MCF 10A (cell line): ENCODE measurements at regions of chr2 and their contacts with region 1.

Region 1: DNA sequence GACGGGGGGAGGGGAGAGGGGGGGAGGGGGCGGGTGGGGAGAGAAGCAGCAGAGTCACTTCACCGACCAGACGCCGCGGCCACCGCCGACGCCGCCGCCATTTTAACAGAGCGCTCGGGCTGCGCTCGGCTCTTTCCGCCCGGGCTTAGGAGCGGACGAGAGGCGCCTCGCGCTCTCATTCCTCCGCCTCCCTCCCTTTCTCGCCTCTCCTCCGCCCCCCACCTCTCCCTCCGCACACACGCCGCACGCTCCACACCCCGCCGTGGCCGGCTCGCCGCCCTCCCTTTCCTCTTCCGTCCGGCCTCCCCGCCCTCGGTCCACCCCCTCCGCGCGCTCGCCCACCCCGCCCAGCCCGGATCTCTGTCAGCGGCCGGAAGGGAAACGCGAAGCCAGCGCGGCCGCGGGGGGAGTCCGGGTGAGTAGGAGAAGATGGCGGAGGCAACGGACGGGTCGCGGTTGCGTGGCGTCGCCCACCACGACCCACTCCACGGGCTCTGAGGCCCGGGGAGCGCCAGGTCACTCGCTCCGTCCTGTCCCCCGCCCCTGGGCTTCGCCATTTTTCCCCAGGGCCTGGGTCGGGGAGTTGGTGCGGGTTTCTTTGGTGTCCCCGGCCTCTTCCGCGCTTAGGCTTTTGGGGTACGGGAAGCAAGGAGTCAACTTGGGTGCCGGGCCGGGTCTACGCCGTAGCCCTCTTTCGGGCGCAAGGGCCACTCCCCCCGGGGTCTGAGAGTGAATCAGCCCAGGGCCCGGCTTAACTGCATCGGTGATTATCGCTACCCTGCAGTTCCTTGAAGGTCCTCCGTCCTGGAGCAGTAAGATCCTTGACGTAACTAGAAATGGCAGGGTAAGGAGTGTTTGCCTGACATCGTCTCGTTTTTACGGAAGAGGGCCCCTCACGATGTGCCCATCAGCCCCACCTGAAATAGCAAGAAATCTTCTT is at the start of gene USP34:
- DNase-seq: peak; percentile 94
- H3K4me3 Mint-ChIP-seq: peak within 1 kb of the TSS; percentile 79
- H3K27ac Mint-ChIP-seq: peak within 1 kb of the TSS; percentile 97
- H3K4me1 Mint-ChIP-seq: peaks cover 8% of the 10 kb centered on the region
- H3K27me3 Mint-ChIP-seq: no peaks in the 10 kb centered on the region
- CTCF ChIP-seq: no peak
- total RNA-seq, gene USP34: 101 and 105 TPM in 2 replicates

Region 2: DNA sequence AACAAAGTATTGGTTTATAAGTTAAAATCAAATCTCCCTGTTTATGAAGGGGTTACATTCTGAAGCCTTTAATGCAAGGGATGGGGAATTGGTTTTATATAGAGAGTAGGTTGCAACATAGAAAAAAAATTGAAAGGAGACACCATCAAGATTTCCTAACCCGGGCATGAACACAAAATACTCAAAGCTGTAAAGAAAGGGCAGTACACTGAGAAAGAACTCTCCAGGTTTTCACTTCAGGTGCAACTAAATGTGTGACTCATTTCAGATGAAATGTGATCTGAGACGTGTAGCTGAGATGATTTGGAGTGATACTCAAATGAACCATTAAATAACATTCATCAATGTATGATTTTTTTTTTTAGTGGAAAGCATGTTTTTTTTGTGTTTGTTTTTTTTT is 361.9 kb before region 1 on chr2:
- CTCF ChIA-PET with region 1: no interaction called
- POLR2A ChIA-PET with region 1: no interaction called
- intact Hi-C with region 1: no loop called
- DNase-seq: peak; percentile 67
- H3K4me3 Mint-ChIP-seq: no peak overlapping the region
- H3K27ac Mint-ChIP-seq: no peak overlapping the region
- H3K4me1 Mint-ChIP-seq: peaks cover 5% of the 10 kb centered on the region
- H3K27me3 Mint-ChIP-seq: no peaks in the 10 kb centered on the region
- CTCF ChIP-seq: no peak

Region 3: GRCh38 chr2:61356261-61356957 is 114.8 kb before region 1 on chr2:
- CTCF ChIA-PET with region 1: no interaction called
- POLR2A ChIA-PET with region 1: interaction called, 4 read pairs
- intact Hi-C with region 1: loop called (anchors 10 kb)
- DNase-seq: peak; percentile 45
- H3K4me3 Mint-ChIP-seq: peak overlapping the region; percentile 34
- H3K27ac Mint-ChIP-seq: peak overlapping the region; percentile 76
- H3K4me1 Mint-ChIP-seq: peaks cover 24% of the 10 kb centered on the region
- H3K27me3 Mint-ChIP-seq: no peaks in the 10 kb centered on the region
- CTCF ChIP-seq: no peak

Region 4: GRCh38 chr2:61426267-61426897 is 44.9 kb before region 1 on chr2:
- CTCF ChIA-PET with region 1: interaction called, 3 read pairs
- POLR2A ChIA-PET with region 1: interaction called, 5 read pairs
- intact Hi-C with region 1: loop called (anchors 10 kb)
- DNase-seq: peak; percentile 69
- H3K4me3 Mint-ChIP-seq: no peak overlapping the region
- H3K27ac Mint-ChIP-seq: no peak overlapping the region
- H3K4me1 Mint-ChIP-seq: peaks cover 38% of the 10 kb centered on the region
- H3K27me3 Mint-ChIP-seq: no peaks in the 10 kb centered on the region
- CTCF ChIP-seq: peak; percentile 35

Region 5: GRCh38 chr2:61460163-61460562 is 11.1 kb before region 1 on chr2:
- CTCF ChIA-PET with region 1: no interaction called
- POLR2A ChIA-PET with region 1: interaction called, 15 read pairs
- intact Hi-C with region 1: no loop called
- DNase-seq: peak; percentile 79
- H3K4me3 Mint-ChIP-seq: no peak overlapping the region
- H3K27ac Mint-ChIP-seq: peak overlapping the region; percentile 70
- H3K4me1 Mint-ChIP-seq: peaks cover 7% of the 10 kb centered on the region
- H3K27me3 Mint-ChIP-seq: no peaks in the 10 kb centered on the region
- CTCF ChIP-seq: no peak